ENCODE measurements at regions of chr4 and their contacts with region 1.

Region 1: DNA sequence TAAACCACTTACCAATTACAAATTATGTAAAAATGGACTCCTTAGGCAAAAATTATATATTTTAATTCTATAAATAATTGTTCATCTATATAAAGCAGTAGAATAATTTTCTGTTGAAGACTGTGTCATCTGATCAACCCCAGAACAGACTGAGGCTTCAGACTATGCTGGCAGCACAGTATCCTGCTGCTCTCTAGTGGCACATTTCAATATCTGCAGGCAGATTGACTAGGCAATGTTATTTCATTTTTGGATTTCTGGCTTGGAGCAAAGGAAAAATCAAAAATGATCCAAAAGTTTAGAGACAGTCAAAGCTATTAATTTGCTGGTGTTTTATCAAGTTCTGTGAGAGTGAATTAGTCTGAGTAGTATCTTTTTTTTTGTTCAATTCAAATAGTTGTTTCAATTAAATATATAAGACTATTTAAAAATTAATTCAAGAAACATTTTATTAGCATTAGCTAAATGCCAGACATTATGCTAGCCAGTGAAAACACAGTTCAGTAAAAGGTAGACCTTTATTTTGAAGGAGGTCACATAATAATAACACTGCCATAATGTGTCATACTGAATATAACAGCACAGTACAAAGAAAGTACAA is 21.3 kb upstream of the SULT1E1 start:
- DNase-seq: peak; percentile 2
- CTCF ChIP-seq: peak; percentile 81

Region 2: GRCh38 chr4:69689599-69689998 is 191.7 kb before region 1 on chr4:
- in situ Hi-C with region 1: loop called (anchors 25 kb)
- DNase-seq: peak; percentile 9
- CTCF ChIP-seq: peak; percentile 55

Measured in GM13977 (cell line).